ENCODE measurements at regions of chr6 and their contacts with region 1.

Region 1: GRCh38 chr6:138017166-138017757 is 90.0 kb downstream of the PERP start:
- DNase-seq: peak; percentile 39
- H3K4me3 ChIP-seq: no peak overlapping the region
- H3K27ac ChIP-seq: no peak overlapping the region
- H3K4me1 ChIP-seq: peaks cover 5% of the 10 kb centered on the region
- H3K27me3 ChIP-seq: peaks cover 0 to 2% of the 10 kb centered on the region in 2 experiments
- CTCF ChIP-seq: no peak
- POLR2A ChIP-seq: no peak

Region 2: DNA sequence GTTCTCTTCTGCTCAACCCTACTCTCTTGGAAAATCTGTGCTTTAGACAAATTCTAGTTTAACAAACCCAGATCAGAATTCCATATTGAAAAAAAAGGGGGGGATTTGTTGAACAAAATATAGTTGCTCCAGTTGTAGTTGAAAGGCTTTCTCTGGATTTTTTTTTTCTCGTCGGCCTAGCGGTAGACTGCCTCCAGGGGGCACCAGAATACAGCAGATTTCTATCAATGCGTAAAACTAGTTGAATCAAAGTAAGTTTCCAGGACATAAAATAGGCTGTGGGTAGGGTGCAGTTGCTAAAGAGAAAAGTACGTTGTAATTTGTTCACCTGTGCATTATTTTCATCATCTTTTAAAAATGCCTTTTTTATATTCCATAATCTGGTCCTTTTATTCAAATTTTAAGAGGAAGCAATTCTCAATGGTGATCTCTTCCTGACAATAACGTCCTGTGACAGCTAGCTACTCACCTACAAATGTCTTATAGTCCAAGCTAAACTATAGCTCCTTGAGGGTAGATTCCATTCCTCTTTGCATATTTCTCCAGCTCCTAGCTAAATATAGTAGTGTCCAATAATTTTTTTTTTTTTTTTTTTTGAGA is 15.4 kb before region 1 on chr6:
- CTCF ChIA-PET with region 1: interaction called, 45 read pairs
- POLR2A ChIA-PET with region 1: no interaction called
- dilution Hi-C with region 1: no loop called
- intact Hi-C with region 1: no loop called
- DNase-seq: peak; percentile 62
- H3K4me3 ChIP-seq: no peak overlapping the region
- H3K27ac ChIP-seq: no peak overlapping the region
- H3K4me1 ChIP-seq: no peaks in the 10 kb centered on the region
- H3K27me3 ChIP-seq: no peaks in the 10 kb centered on the region
- CTCF ChIP-seq: peak; percentile 69 to 82
- POLR2A ChIP-seq: no peak

Region 3: DNA sequence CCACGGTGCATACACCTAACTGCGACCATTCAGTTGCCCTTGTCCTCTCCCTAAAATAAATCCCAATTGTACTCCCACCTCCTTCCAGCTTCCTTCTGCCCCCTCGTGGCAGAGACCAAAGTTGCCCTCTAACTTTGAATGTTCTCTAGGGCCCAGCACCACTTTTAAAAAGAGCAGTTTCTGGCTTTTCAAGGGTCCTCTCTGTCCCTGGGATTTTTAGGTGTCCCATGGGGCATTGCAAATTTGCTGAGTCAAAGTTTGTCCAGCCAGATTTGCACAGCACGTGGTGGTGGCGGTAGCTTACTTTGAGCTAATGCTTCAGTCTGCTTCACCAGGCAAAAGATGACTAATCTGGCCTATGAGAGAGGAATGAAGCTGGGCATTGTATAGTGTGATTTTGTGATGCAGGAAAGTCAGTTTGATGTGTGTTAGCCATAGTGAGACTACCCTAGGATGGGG is 10.2 kb before region 1 on chr6:
- CTCF ChIA-PET with region 1: interaction called, 45 read pairs
- POLR2A ChIA-PET with region 1: no interaction called
- dilution Hi-C with region 1: no loop called
- intact Hi-C with region 1: no loop called
- DNase-seq: peak; percentile 27
- H3K4me3 ChIP-seq: no peak overlapping the region
- H3K27ac ChIP-seq: no peak overlapping the region
- H3K4me1 ChIP-seq: no peaks in the 10 kb centered on the region
- H3K27me3 ChIP-seq: no peaks in the 10 kb centered on the region
- CTCF ChIP-seq: peak; percentile 50 to 63
- POLR2A ChIP-seq: no peak